ENCODE measurements at regions of chr9 and their contacts with region 1.

Region 1: DNA sequence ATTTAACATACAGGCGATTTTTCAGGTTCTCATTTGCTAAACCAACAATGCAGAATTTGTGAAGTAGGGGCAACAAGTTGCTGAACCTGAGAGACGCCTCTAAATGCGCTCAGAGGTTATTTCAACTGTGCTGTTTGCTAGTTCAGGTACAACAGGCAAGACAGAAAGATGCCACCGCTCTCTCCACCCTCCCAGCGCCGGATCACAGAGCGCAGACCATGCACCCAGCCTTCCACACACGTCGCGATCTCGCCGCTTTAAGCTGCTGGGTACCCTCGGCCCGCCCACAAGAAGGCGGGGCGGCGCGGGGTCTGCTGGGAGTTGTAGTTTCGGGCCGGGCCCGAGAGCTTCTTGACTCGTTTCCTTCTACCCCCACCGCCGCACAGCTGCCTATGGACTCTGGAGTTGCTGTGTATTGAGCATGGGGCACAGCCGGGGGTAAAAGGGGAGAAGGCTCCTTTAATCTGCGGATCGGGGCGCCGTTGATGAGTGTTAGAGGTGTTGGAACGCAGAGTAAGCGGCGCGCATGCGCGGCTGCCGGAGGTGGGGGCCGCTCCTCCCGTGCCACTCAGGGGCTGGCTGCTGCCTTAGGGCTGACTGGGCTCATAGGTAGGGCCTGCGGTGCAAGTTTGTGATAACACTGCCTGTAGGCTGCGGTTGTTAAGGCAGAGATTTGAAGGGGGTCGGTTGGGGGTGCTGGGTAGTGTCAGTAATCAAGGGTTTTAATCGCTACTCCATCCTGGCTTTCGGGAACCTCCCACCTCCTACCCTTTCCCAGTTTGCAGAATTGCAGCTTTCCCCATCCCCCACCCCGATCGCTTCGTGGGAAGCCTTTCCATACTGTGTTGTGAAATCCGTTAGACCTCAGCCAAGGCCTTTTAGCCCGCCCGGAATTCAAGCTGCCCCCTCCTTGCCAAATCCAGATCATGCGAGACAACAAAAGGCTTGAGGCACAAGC is 40.3 kb upstream of the ABCA1 start:
- DNase-seq: peak; percentile 89
- H3K4me3 Mint-ChIP-seq: peak overlapping the region; percentile 79
- H3K27ac Mint-ChIP-seq: peak overlapping the region; percentile 36
- H3K4me1 Mint-ChIP-seq: peaks cover 10% of the 10 kb centered on the region
- H3K27me3 Mint-ChIP-seq: peaks cover 22% of the 10 kb centered on the region

Region 2: DNA sequence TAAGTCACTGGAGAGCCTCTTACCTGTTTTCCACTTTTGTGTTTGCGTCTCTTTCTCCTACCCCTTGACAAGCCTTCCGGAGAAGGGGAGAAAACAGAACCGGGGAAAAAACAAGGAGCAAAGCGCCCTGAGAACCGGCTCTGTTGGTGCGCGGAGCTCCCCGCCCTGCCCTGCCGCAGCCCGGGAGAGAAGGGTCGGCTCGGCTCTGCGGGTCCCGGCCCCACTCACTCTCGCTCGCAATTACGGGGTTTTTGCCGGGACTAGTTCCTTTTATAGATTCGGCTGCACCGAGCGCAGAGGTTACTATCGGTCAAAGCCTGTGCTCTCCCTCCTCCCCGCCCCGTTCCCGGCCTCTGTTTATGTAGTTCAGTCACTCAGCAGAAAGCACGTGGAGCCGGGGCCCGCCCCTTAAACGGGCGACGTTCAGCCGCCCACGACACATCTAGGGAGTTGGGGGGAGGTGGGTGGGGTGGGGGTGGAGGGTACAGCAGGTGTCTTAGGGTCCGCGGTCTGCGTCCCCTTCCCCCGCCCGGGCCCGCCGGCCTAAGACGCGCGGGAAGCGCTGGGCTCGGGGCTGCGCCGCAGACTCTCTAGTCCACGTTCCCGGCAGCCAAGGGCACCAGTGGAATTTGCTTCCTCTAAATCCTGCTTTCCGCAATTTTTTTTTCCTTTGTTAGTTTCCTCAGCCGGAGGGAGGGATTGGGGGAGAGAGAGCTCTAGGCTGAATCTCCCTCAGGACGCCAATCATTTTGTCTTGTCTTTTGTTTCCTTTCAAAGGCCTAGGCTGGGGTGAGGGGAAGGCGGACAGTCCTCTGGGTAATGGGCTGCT is 40.2 kb before region 1 on chr9 and contains the start of gene ABCA1:
- CTCF ChIA-PET with region 1: interaction called, 15 read pairs
- POLR2A ChIA-PET with region 1: interaction called, 8 read pairs
- DNase-seq: peak; percentile 67
- H3K4me3 Mint-ChIP-seq: peak within 1 kb of the TSS; percentile 80
- H3K27ac Mint-ChIP-seq: no peak within 1 kb of the TSS
- H3K4me1 Mint-ChIP-seq: peaks cover 24% of the 10 kb centered on the region
- H3K27me3 Mint-ChIP-seq: peaks cover 32% of the 10 kb centered on the region
- total RNA-seq, gene ABCA1: 0.93 to 1.6 TPM